ENCODE measurements at regions of chr11 and their contacts with region 1.

Region 1: GRCh38 chr11:35391922-35392813 is 27.2 kb downstream of the SLC1A2 start:
- DNase-seq: peak; percentile 75 to 78
- ATAC-seq: peak; percentile 94 to 95
- H3K4me3 ChIP-seq: no peak overlapping the region
- H3K27ac ChIP-seq: peak overlapping the region; percentile 67 to 75
- H3K4me1 ChIP-seq: peaks cover 37% of the 10 kb centered on the region
- CTCF ChIP-seq: peak; percentile 95
- EP300 ChIP-seq: no peak
- POLR2A ChIP-seq: no peak
- RAD21 ChIP-seq: peak; percentile 99

Region 2: DNA sequence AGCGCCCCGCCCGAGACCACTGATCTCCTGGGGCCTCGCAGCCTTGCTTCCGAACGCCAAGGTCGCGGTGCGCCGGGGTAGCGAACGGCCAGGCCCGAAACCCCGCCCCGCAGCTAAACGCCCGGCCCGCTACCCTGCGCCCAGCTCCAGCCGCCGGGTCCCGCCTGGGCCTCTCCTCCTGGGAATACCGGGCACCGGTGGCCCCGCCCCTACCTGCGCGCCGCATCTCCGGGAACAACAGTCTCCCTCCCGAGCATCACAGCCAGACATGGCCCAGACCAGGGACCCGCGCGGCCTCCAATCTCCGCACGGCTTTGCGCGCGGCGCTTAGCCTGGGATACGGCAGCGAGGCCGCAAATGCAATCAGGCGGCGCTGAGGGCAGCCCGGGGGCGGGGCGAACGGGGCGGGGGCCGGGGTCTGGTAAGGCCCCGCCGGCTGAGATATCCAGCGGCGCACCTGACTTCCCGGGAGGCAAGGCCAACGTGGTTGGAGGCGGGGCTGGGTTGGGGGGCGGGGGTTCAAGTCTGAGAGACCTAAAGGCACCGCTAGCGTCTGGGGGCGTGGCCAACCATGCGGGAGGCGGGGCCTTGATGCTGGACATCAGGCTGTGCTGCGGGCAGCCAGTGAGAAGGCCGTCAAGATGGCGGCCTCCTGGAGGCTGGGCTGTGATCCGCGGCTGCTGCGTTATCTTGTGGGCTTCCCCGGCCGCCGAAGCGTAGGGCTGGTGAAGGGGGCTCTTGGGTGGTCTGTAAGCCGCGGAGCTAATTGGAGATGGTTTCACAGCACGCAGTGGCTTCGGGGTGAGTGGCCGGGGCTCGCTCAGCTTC is 475.9 kb before region 1 on chr11 and contains the starts of genes APIP and PDHX:
- CTCF ChIA-PET with region 1: interaction called, 51 read pairs
- POLR2A ChIA-PET with region 1: no interaction called
- DNase-seq: peak; percentile 90 to 99
- ATAC-seq: peak; percentile 92 to 96
- H3K4me3 ChIP-seq: peak within 1 kb of the TSS; percentile 78
- H3K27ac ChIP-seq: peak within 1 kb of the TSS; percentile 92 to 98
- H3K4me1 ChIP-seq: peaks cover 20% of the 10 kb centered on the region
- CTCF ChIP-seq: no peak
- EP300 ChIP-seq: no peak
- POLR2A ChIP-seq: peak; percentile 97
- RAD21 ChIP-seq: no peak
- polyA plus RNA-seq, gene APIP: 35.1 and 55.6 TPM in 2 replicates
- polyA plus RNA-seq, gene PDHX: 51.4 and 87.4 TPM in 2 replicates

Region 3: DNA sequence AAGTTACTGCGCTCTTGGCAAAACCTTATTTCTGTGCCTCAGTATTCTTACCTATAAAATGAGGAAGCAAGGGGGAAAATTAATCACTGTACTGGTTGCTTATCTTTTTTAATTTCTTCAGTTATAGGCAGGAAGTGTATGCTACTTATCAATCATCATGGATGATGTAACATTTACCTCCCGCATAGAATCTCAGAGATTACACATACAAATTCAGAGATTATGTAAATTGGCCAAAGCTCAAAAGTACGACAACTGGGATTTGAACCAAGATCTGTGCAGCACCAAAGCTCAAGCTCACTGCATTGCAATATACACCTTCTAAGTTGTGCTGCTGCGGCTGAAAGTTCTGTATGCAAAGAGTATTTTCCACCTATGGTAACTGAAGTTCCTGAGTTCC is 392.7 kb before region 1 on chr11:
- CTCF ChIA-PET with region 1: interaction called, 17 read pairs
- POLR2A ChIA-PET with region 1: no interaction called
- DNase-seq: no peak
- ATAC-seq: no peak
- H3K4me3 ChIP-seq: no peak overlapping the region
- H3K27ac ChIP-seq: peak overlapping the region in 1 of 2 experiments; percentile 58; a peak in 2 of 6 replicates
- H3K4me1 ChIP-seq: peaks cover 32% of the 10 kb centered on the region
- CTCF ChIP-seq: no peak
- EP300 ChIP-seq: no peak
- POLR2A ChIP-seq: no peak
- RAD21 ChIP-seq: no peak

Region 4: GRCh38 chr11:35352077-35352888 is 39.9 kb before region 1 on chr11:
- CTCF ChIA-PET with region 1: interaction called, 10 read pairs
- POLR2A ChIA-PET with region 1: no interaction called
- DNase-seq: no peak
- ATAC-seq: 0 out of 6 replicates have a peak, but pooled peaks of 1 of the 2 experiments have one; percentile 13
- H3K4me3 ChIP-seq: no peak overlapping the region
- H3K27ac ChIP-seq: peak overlapping the region in 1 of 2 experiments; percentile 17; a peak in 3 of 6 replicates
- H3K4me1 ChIP-seq: peaks cover 10% of the 10 kb centered on the region; the same call in 1 of the 3 replicates
- CTCF ChIP-seq: no peak
- EP300 ChIP-seq: no peak
- POLR2A ChIP-seq: no peak
- RAD21 ChIP-seq: no peak

Region 5: DNA sequence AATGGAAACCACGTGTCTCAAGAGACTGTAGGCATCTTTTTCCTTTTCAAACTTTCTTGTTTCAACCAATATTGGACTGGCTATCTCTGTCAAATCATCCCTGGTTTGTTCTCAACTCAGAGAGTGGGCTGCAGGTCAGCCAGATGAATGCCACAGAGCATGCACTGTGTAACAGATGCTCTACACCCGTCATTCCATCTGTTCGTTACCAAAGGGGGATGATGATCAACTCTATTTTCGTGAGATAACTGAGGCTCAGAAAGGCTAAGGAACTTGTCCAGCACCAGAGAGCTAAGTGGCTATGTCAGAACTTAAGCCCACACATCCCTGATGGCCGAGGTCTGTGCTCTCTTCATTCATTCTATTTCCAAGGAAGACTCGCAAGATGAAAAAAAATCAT is 14.9 kb before region 1 on chr11:
- CTCF ChIA-PET with region 1: interaction called, 18 read pairs
- POLR2A ChIA-PET with region 1: interaction called, 3 read pairs
- DNase-seq: no peak
- ATAC-seq: no peak
- H3K4me3 ChIP-seq: no peak overlapping the region
- H3K27ac ChIP-seq: no peak overlapping the region
- H3K4me1 ChIP-seq: peaks cover 21% of the 10 kb centered on the region
- CTCF ChIP-seq: no peak
- EP300 ChIP-seq: no peak
- POLR2A ChIP-seq: no peak
- RAD21 ChIP-seq: no peak

Region 6: GRCh38 chr11:35412285-35412684 is 20.1 kb after region 1 on chr11:
- CTCF ChIA-PET with region 1: interaction called, 16 read pairs
- POLR2A ChIA-PET with region 1: no interaction called
- DNase-seq: peak; percentile 25 to 43
- ATAC-seq: peak; percentile 65 to 82; a peak in 5 of 6 replicates
- H3K4me3 ChIP-seq: no peak overlapping the region
- H3K27ac ChIP-seq: no peak overlapping the region
- H3K4me1 ChIP-seq: no peaks in the 10 kb centered on the region
- CTCF ChIP-seq: peak; percentile 72
- EP300 ChIP-seq: no peak
- POLR2A ChIP-seq: no peak
- RAD21 ChIP-seq: peak; percentile 72 to 74

Region 7: GRCh38 chr11:35432464-35432863 is 40.3 kb after region 1 on chr11:
- CTCF ChIA-PET with region 1: no interaction called
- POLR2A ChIA-PET with region 1: no interaction called
- DNase-seq: no peak
- ATAC-seq: no peak
- H3K4me3 ChIP-seq: no peak overlapping the region
- H3K27ac ChIP-seq: no peak overlapping the region
- H3K4me1 ChIP-seq: no peaks in the 10 kb centered on the region
- CTCF ChIP-seq: no peak
- EP300 ChIP-seq: no peak
- POLR2A ChIP-seq: no peak
- RAD21 ChIP-seq: no peak

Region 8: GRCh38 chr11:35529971-35530495 is 137.9 kb after region 1 on chr11:
- CTCF ChIA-PET with region 1: no interaction called
- POLR2A ChIA-PET with region 1: no interaction called
- DNase-seq: no peak
- ATAC-seq: peak; percentile 44 to 69; a peak in 4 of 6 replicates
- H3K4me3 ChIP-seq: no peak overlapping the region
- H3K27ac ChIP-seq: peak overlapping the region; percentile 32 to 62; a peak in 4 of 6 replicates
- H3K4me1 ChIP-seq: peaks cover 12% of the 10 kb centered on the region
- CTCF ChIP-seq: no peak
- EP300 ChIP-seq: no peak
- POLR2A ChIP-seq: no peak
- RAD21 ChIP-seq: no peak

Measured in A549 (cell line).